ENCODE measurements at regions of chr1 and their contacts with region 1.

Region 1: DNA sequence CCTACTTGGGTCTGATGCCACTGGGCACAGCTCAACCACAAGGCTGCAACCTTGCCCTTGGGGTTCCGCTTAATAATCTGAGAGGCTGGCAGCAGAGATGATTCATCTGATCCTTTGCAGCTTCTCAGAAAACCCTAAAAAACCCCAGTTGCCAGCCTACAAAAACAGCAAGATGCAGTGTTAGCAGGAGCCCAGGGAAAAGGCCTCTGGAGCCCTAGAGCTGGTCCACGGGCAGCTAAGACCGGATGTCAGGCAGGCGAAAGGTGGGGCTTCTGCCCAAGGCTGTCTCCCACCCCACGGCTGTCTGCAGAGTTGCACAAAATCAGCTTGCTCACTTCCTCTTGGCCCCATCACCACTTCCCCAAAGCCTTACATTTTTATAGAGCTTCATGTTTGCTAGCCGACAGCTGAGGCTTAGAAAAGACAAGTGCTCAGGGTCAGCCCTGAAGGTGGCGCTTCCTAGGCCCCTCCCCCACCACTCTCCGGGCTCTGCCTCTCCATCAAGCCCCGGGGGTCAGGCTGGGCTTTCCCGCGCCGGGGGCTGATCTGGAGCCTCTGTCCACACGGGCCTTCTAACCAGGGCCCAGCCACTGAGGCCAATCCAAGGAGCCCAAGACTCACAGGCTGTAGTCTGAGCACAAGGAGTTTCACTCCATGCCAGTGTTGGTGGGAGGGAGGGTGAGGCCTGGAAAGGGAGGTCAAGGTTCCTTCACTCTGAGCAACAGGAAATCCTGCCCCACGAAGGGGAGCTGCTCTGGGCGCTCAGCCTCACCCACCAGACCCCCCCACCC is 4.2 kb upstream of the ADORA3 start:
- DNase-seq: peak; percentile 82
- ATAC-seq: peak; percentile 79
- H3K4me3 ChIP-seq: peak overlapping the region; percentile 69
- H3K27ac ChIP-seq: peak overlapping the region; percentile 99
- H3K4me1 ChIP-seq: peaks cover 58% of the 10 kb centered on the region
- H3K27me3 ChIP-seq: no peaks in the 10 kb centered on the region
- CTCF ChIP-seq: peak in 2 of 3 experiments; percentile 15 to 32; a peak in 1 of 6 replicates
- EP300 ChIP-seq: peak in 1 of 2 experiments; percentile 73; a peak in 2 of 4 replicates
- POLR2A ChIP-seq: peak; percentile 62
- RAD21 ChIP-seq: no peak

Region 2: DNA sequence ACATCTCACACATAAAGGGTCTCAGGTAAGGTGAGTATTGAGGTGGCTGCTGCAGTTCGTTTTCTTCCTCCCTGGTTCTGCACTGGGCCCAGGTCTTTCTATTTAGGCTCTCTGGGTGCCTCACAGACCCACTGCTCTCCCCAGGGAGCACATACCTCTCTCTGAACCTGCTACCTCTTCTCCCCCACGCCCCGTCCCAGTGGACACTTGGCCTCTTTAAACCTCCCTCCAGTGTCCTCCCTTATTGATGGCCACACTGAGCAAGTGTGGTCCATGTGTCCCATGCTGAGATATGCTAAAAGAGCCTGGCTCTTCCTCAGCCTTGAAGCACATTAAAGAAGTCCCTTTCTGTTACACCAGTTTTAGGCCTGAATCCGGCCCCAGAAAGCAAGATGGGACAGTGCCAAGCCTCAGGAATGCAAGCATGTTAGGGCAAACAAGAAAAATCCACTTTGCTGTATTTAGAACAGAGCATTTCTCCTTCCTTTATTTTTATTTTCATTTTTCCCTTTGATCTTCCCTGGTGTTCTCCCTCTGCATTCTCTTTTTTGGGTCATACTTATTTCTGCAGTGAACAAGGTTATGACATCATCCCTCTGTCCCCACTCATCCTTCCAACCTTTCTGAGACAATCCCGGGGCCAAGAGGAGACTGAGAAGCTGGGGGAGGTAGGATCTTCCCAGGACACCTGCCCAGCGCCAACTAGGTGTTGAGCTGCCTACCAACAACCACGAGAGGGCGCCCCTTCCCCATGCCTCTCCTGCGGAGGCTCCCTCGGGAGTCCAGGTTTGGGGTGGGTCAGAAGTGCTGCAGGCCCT is 285.1 kb before region 1 on chr1:
- CTCF ChIA-PET with region 1: interaction called, 11 read pairs
- POLR2A ChIA-PET with region 1: interaction called, 3 read pairs
- RAD21 ChIA-PET with region 1: interaction called, 18 read pairs
- SMC1A ChIA-PET with region 1: interaction called, 14 read pairs
- in situ Hi-C with region 1: no loop called
- intact Hi-C with region 1: loop called (anchors 2 kb)
- DNase-seq: peak; percentile 81
- ATAC-seq: peak; percentile 57
- H3K4me3 ChIP-seq: peak overlapping the region; percentile 23; the same call in 1 of the 2 replicates
- H3K27ac ChIP-seq: peak overlapping the region; percentile 100
- H3K4me1 ChIP-seq: peaks cover 88% of the 10 kb centered on the region
- H3K27me3 ChIP-seq: no peaks in the 10 kb centered on the region
- CTCF ChIP-seq: peak; percentile 96 to 97 (median 96); a peak in 5 of 6 replicates
- EP300 ChIP-seq: no peak
- POLR2A ChIP-seq: no peak
- RAD21 ChIP-seq: peak; percentile 99

Region 3: GRCh38 chr1:111372336-111372965 is 135.2 kb before region 1 on chr1:
- CTCF ChIA-PET with region 1: no interaction called
- POLR2A ChIA-PET with region 1: no interaction called
- RAD21 ChIA-PET with region 1: no interaction called
- SMC1A ChIA-PET with region 1: no interaction called
- in situ Hi-C with region 1: no loop called
- intact Hi-C with region 1: no loop called
- DNase-seq: no peak
- ATAC-seq: no peak
- H3K4me3 ChIP-seq: no peak overlapping the region
- H3K27ac ChIP-seq: no peak overlapping the region
- H3K4me1 ChIP-seq: no peaks in the 10 kb centered on the region
- H3K27me3 ChIP-seq: peaks cover 2 to 4% of the 10 kb centered on the region in 2 experiments; a peak in 2 of 4 replicates
- CTCF ChIP-seq: no peak
- EP300 ChIP-seq: no peak
- POLR2A ChIP-seq: no peak
- RAD21 ChIP-seq: no peak

Region 4: DNA sequence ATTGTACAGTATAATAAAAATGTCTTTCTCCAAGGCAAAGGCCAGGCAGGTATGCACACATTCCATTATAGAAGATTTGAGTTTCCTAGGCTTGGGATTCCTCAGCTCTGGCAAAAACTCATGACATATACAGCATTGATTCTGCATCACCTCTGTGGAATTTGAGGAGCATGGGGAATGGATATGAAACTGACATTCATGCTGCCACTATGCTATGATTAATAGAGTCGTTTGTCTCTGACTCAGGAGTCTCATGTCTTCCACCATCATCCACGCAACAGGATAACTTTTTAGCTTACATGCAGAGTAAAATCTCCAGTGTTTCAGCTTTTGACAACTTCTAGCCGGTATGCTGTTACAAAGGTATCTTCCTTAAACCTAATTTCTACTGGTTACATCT is 45.6 kb after region 1 on chr1:
- CTCF ChIA-PET with region 1: interaction called, 7 read pairs
- POLR2A ChIA-PET with region 1: no interaction called
- RAD21 ChIA-PET with region 1: interaction called, 10 read pairs
- SMC1A ChIA-PET with region 1: interaction called, 22 read pairs
- in situ Hi-C with region 1: no loop called
- intact Hi-C with region 1: no loop called
- DNase-seq: no peak
- ATAC-seq: no peak
- H3K4me3 ChIP-seq: no peak overlapping the region
- H3K27ac ChIP-seq: no peak overlapping the region
- H3K4me1 ChIP-seq: no peaks in the 10 kb centered on the region
- H3K27me3 ChIP-seq: no peaks in the 10 kb centered on the region
- CTCF ChIP-seq: no peak
- EP300 ChIP-seq: no peak
- POLR2A ChIP-seq: no peak
- RAD21 ChIP-seq: no peak

Region 5: GRCh38 chr1:111619635-111620440 is 112.2 kb after region 1 on chr1 and contains the start of gene RAP1A:
- CTCF ChIA-PET with region 1: interaction called, 38 read pairs
- POLR2A ChIA-PET with region 1: interaction called, 15 read pairs
- RAD21 ChIA-PET with region 1: interaction called, 98 read pairs
- SMC1A ChIA-PET with region 1: interaction called, 94 read pairs
- in situ Hi-C with region 1: no loop called
- intact Hi-C with region 1: loop called (anchors 2 kb)
- DNase-seq: peak; percentile 55
- ATAC-seq: peak; percentile 64
- H3K4me3 ChIP-seq: peak within 1 kb of the TSS; percentile 87
- H3K27ac ChIP-seq: peak within 1 kb of the TSS; percentile 94
- H3K4me1 ChIP-seq: peaks cover 34% of the 10 kb centered on the region
- H3K27me3 ChIP-seq: no peaks in the 10 kb centered on the region
- CTCF ChIP-seq: no peak
- EP300 ChIP-seq: no peak
- POLR2A ChIP-seq: peak; percentile 84
- RAD21 ChIP-seq: no peak
- polyA plus RNA-seq, gene RAP1A: 71.8 to 93.7 TPM

Region 6: GRCh38 chr1:111666841-111667270 is 159.2 kb after region 1 on chr1:
- CTCF ChIA-PET with region 1: interaction called, 24 read pairs
- POLR2A ChIA-PET with region 1: interaction called, 3 read pairs
- RAD21 ChIA-PET with region 1: interaction called, 17 read pairs
- SMC1A ChIA-PET with region 1: interaction called, 14 read pairs
- in situ Hi-C with region 1: no loop called
- intact Hi-C with region 1: no loop called
- DNase-seq: no peak
- ATAC-seq: no peak
- H3K4me3 ChIP-seq: no peak overlapping the region
- H3K27ac ChIP-seq: no peak overlapping the region
- H3K4me1 ChIP-seq: peaks cover 12% of the 10 kb centered on the region
- H3K27me3 ChIP-seq: no peaks in the 10 kb centered on the region
- CTCF ChIP-seq: no peak
- EP300 ChIP-seq: no peak
- POLR2A ChIP-seq: no peak
- RAD21 ChIP-seq: no peak

Region 7: GRCh38 chr1:111739194-111739924 is 231.8 kb after region 1 on chr1 and contains the start of gene INKA2:
- CTCF ChIA-PET with region 1: interaction called, 109 read pairs
- POLR2A ChIA-PET with region 1: interaction called, 4 read pairs
- RAD21 ChIA-PET with region 1: interaction called, 51 read pairs
- SMC1A ChIA-PET with region 1: interaction called, 123 read pairs
- in situ Hi-C with region 1: no loop called
- intact Hi-C with region 1: no loop called
- DNase-seq: peak; percentile 47
- ATAC-seq: peak; percentile 90
- H3K4me3 ChIP-seq: peak within 1 kb of the TSS; percentile 86
- H3K27ac ChIP-seq: peak within 1 kb of the TSS; percentile 45
- H3K4me1 ChIP-seq: peaks cover 11% of the 10 kb centered on the region
- H3K27me3 ChIP-seq: peaks cover 0 to 8% of the 10 kb centered on the region in 2 experiments; a peak in 2 of 4 replicates
- CTCF ChIP-seq: peak in 1 of 3 experiments; percentile 11; a peak in 1 of 6 replicates
- EP300 ChIP-seq: no peak
- POLR2A ChIP-seq: peak; percentile 41; the same call in 1 of the 2 replicates
- RAD21 ChIP-seq: no peak
- polyA plus RNA-seq, gene INKA2: 0.38 TPM in 1 of 2 experiments, not detected in the other

Measured in GM12878 (cell line).